Right lobe of liver (tissue), 6 donors: ENCODE measurements at regions of chr21 and their contacts with region 1.

Region 1: GRCh38 chr21:42850866-42851391 is 28.4 kb downstream of the WDR4 start:
- DNase-seq: peak in 1 of 3 donors; percentile 56
- ATAC-seq: peak; percentile 59 to 69 (median 64)
- H3K4me3 ChIP-seq: no peak overlapping the region
- H3K27ac ChIP-seq: no peak overlapping the region
- H3K4me1 ChIP-seq: no peaks in the 10 kb centered on the region
- H3K27me3 ChIP-seq: no peaks in the 10 kb centered on the region
- CTCF ChIP-seq: peak in 3 of 4 donors; percentile 40 to 54 (median 41)
- POLR2A ChIP-seq: no peak

Region 2: DNA sequence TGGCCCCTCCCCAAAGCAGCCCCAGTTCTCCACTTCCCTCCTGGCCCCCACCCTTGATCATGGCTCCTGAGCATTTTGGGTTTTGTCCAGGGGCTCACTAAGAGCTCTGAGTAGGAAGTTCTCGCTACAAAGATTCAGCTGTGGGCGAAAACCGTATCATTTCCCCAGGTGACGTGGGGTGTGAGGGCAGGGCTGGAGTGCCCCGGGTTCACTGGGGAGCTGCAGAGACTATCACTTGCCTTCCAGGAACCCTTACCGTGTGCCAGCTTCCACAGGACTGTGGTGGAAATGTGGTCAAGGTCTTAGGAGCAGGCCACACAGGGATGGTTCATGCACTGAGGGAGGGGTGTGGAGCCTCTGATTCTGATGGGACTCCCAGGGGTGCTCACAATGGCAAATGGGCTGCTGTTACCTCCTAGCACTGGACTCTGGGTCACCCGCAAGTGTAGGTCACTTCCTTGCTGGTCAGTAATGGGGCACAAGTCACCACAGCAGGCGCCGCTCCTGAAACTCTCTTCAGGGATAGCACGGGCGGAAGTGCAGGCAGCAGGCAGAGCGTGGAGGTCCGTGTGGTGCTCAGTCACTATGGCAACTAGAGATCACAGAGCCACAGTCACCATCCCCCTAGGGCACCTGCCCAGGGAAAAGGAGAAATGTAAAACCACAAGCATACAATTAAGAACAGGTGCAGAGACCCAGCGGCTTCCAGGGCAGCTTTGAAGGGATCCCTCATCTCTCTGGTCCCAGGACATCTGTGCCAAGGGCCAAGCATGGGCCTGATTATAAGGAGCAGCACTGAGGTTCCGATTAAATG is 390.3 kb before region 1 on chr21:
- intact Hi-C with region 1: no loop called
- DNase-seq: peak in 2 of 3 donors; percentile 40 to 43
- ATAC-seq: no peak
- H3K4me3 ChIP-seq: no peak overlapping the region
- H3K27ac ChIP-seq: no peak overlapping the region
- H3K4me1 ChIP-seq: peaks cover 0 to 37% (median 17%) of the 10 kb centered on the region in 4 donors
- H3K27me3 ChIP-seq: no peaks in the 10 kb centered on the region
- CTCF ChIP-seq: no peak
- POLR2A ChIP-seq: no peak

Region 3: DNA sequence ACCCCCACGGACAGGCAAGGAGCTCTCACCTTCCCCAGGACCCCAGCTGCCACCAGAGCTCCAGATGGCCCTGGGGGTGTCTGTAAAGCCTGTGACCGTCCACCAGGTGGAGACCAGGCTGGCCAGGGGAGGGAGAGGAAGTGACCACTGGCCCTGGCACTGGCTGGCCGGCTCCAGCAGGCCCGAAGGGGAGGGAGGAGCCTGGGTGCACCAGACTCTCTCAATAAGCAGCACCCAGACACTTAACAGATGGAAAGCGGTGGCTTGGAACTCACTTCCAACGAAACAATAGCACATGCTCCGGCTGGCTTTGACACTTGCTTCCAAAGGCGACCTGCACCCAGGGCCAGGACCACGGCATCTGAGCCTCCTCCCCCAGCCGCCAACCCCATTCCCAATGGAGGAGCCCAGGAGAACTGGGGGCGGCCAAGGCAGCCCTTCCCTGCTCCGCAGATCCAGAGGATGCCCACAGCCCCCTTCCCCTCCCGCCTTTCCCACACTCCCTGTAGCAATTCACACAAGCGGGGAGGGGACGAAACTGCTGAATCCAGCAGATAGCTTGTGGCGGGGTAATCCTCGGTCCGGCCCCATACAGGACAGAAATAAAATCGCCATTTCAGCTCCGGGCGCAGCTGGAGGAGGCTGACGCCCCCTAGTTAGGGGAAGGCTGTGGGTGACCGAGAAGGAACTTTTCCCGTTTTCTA is 198.2 kb before region 1 on chr21:
- intact Hi-C with region 1: no loop called
- DNase-seq: peak; percentile 83 to 85 (median 84)
- ATAC-seq: peak; percentile 91 to 97 (median 96)
- H3K4me3 ChIP-seq: peak overlapping the region; percentile 30 to 40 (median 36)
- H3K27ac ChIP-seq: peak overlapping the region in 1 of 3 donors; percentile 34
- H3K4me1 ChIP-seq: peaks cover 0 to 12% (median 2%) of the 10 kb centered on the region in 4 donors
- H3K27me3 ChIP-seq: no peaks in the 10 kb centered on the region
- CTCF ChIP-seq: peak; percentile 56 to 87 (median 64)
- POLR2A ChIP-seq: peak; percentile 30

Region 4: GRCh38 chr21:42684109-42684916 is 166.6 kb before region 1 on chr21:
- intact Hi-C with region 1: no loop called
- DNase-seq: no peak
- ATAC-seq: no peak
- H3K4me3 ChIP-seq: no peak overlapping the region
- H3K27ac ChIP-seq: no peak overlapping the region
- H3K4me1 ChIP-seq: no peaks in the 10 kb centered on the region
- H3K27me3 ChIP-seq: no peaks in the 10 kb centered on the region
- CTCF ChIP-seq: no peak
- POLR2A ChIP-seq: no peak

Region 5: GRCh38 chr21:42913476-42913875 is 62.5 kb after region 1 on chr21:
- intact Hi-C with region 1: loop called in 1 of 2 experiments (anchors 10 kb)
- DNase-seq: no peak
- ATAC-seq: peak in 2 of 4 donors; percentile 26 to 34
- H3K4me3 ChIP-seq: no peak overlapping the region
- H3K27ac ChIP-seq: no peak overlapping the region
- H3K4me1 ChIP-seq: no peaks in the 10 kb centered on the region
- H3K27me3 ChIP-seq: no peaks in the 10 kb centered on the region
- CTCF ChIP-seq: no peak
- POLR2A ChIP-seq: no peak

Region 6: GRCh38 chr21:42939582-42940410 is 88.9 kb after region 1 on chr21:
- intact Hi-C with region 1: no loop called
- DNase-seq: peak in 1 of 3 donors; percentile 82
- ATAC-seq: peak; percentile 95 to 98 (median 97)
- H3K4me3 ChIP-seq: no peak overlapping the region
- H3K27ac ChIP-seq: no peak overlapping the region
- H3K4me1 ChIP-seq: peaks cover 0 to 12% (median 0%) of the 10 kb centered on the region in 4 donors
- H3K27me3 ChIP-seq: no peaks in the 10 kb centered on the region
- CTCF ChIP-seq: no peak
- POLR2A ChIP-seq: no peak